ENCODE measurements at regions of chr11 and their contacts with region 1.

Region 1: GRCh38 chr11:47186937-47187695 is 882 bp upstream of the PACSIN3 start:
- DNase-seq: peak; percentile 55 to 91
- H3K4me3 ChIP-seq: peak overlapping the region; percentile 81 to 83
- H3K27ac ChIP-seq: peak overlapping the region; percentile 95 to 97
- H3K4me1 ChIP-seq: peaks cover 0 to 54% (median 44%) of the 10 kb centered on the region in 4 donors
- H3K27me3 ChIP-seq: no peaks in the 10 kb centered on the region
- CTCF ChIP-seq: no peak

Region 2: GRCh38 chr11:47056261-47056915 is 130.7 kb before region 1 on chr11:
- intact Hi-C with region 1: no loop called
- DNase-seq: no peak
- H3K4me3 ChIP-seq: no peak overlapping the region
- H3K27ac ChIP-seq: no peak overlapping the region
- H3K4me1 ChIP-seq: peaks cover 0 to 2% (median 0%) of the 10 kb centered on the region in 4 donors
- H3K27me3 ChIP-seq: no peaks in the 10 kb centered on the region
- CTCF ChIP-seq: no peak

Region 3: GRCh38 chr11:47213985-47214564 is 27.0 kb after region 1 on chr11:
- intact Hi-C with region 1: loop called (anchors 1 kb)
- DNase-seq: peak; percentile 96 to 98
- H3K4me3 ChIP-seq: peak overlapping the region; percentile 65 to 66
- H3K27ac ChIP-seq: peak overlapping the region; percentile 93 to 94
- H3K4me1 ChIP-seq: peaks cover 0 to 43% (median 28%) of the 10 kb centered on the region in 4 donors
- H3K27me3 ChIP-seq: no peaks in the 10 kb centered on the region
- CTCF ChIP-seq: no peak